AG04449 (cell line): ENCODE measurements at regions of chr12 and their contacts with region 1.

Region 1: GRCh38 chr12:52278541-52279421 is 4.3 kb downstream of the KRT86 start:
- DNase-seq: no peak
- H3K4me3 ChIP-seq: peak overlapping the region; percentile 13; the same call in 1 of the 2 replicates
- CTCF ChIP-seq: peak; percentile 100

Region 2: GRCh38 chr12:52192173-52192791 is 86.5 kb before region 1 on chr12:
- CTCF ChIA-PET with region 1: interaction called, 16 read pairs
- POLR2A ChIA-PET with region 1: no interaction called
- DNase-seq: peak; percentile 98
- H3K4me3 ChIP-seq: no peak overlapping the region
- CTCF ChIP-seq: no peak

Region 3: DNA sequence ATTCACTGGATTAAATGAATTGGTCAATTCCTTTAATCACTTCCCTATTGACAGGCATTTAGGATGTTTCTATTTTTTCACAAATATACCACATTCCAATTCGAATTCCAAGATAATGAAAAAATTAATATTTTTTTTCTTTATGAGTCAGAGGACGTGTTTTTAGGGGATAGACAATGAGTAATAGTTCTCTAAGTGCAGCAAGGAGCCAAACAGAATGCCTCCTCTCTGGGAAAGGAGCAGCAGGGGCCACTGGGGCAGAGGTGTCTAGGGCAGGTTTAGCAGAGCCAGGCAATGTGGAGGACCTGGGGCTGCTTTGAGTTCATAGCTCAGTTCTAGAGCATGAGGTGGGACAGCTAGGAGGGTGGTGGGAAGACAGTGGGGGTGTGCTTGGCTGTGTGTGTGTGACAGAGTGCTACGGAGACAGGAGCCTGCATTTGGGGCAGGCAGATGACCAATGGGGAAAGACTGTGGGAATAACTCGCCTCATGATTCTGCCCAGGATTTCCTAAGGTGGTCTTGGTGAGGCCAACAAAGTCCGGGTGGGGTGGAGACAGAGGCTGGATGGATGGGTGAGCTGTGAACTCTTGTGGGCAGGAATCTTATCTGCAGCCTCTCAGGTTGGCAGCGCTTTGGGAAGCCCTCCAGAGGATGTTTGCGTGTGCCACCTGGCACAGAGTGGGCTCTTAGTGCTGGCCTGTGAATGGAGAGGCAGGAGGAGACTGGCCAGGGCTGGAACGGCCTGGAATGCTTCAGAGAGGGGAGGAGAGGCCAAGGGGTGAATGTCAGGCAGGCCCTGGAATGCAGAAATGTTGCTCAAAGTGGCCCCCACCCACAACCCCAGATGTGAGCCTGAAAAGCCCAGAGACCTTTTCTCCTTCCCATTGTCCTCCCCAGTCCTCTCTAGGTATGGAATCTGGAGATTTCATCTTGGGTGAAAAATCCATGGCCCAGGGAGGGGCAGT is 48.2 kb before region 1 on chr12:
- CTCF ChIA-PET with region 1: interaction called, 46 read pairs
- POLR2A ChIA-PET with region 1: interaction called, 3 read pairs
- DNase-seq: peak; percentile 50
- H3K4me3 ChIP-seq: no peak overlapping the region
- CTCF ChIP-seq: no peak

Region 4: DNA sequence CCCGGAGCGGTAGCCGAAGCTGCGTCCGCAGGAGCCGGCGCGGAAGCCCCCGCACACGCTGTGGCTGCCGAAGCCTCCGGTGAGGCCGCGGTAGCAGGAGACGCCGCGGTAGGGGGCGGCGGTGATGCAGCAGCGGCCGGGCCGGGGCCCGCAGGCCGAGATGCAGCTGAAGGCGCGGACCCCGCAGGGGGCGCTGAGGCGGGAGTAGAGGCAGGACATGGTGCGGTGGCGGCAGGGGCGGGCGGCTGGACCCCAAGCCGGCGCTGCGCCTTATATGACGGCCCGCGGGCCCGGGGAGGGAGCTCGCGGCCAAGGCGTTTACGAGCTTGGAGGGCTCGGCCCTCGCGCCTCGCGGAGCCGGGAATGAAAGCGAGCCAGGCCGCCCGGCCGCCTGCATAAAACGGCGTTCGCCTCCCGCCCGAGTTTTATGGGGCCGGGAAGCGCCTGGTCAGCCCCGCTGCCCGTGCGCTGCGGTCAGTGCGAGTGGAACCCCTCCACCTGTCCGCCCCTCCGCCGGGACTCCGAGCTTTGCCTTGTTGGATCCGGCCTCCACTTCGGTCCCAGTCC is 20.4 kb before region 1 on chr12:
- CTCF ChIA-PET with region 1: interaction called, 146 read pairs
- POLR2A ChIA-PET with region 1: no interaction called
- DNase-seq: no peak
- H3K4me3 ChIP-seq: peak overlapping the region; percentile 8; the same call in 1 of the 2 replicates
- CTCF ChIP-seq: no peak

Region 5: DNA sequence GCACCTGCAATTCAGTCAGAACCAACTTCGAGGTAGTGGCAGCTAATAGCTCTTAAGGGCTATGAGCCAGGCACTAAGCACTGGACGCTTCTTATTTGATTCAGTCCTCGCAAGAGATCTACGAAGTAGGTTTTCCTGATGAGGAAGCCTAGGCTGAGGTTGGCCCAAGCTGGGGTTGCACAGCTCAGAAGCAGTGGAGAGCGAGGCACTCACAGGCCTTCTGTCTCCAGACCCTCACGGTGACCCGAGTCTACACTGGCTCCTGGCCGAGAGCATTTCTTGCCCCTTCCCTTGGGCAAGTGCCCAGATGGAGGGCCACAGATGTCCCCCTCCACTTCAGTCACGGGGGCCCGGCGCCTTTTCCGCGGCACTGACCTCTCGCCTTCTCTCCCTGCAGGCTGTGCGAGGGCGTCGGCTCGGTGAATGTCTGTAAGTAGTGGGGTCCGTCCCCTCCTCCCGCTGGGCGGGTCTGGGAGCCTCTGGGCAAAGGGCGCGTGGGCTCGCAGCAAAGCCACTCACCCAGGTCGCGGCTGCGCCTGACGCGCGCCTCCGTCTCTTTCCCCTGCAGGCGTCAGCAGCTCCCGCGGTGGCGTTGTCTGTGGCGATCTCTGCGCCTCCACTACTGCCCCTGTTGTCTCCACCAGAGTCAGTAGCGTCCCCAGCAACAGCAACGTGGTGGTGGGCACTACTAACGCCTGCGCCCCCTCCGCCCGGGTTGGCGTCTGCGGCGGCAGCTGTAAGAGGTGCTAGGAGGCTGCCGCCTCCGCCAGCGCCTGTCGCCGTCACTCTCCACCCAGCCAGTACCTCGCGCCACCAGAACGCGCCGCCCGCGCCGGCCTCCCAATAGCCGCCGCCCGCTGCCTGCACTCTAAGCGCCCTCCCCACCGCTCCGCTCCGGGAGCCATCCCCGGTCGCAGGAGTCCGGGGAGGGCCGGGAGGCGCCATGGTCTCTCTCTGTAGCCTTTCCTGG is 29.3 kb after region 1 on chr12:
- CTCF ChIA-PET with region 1: interaction called, 29 read pairs
- POLR2A ChIA-PET with region 1: interaction called, 3 read pairs
- DNase-seq: no peak
- H3K4me3 ChIP-seq: peak overlapping the region; percentile 53
- CTCF ChIP-seq: no peak

Region 6: DNA sequence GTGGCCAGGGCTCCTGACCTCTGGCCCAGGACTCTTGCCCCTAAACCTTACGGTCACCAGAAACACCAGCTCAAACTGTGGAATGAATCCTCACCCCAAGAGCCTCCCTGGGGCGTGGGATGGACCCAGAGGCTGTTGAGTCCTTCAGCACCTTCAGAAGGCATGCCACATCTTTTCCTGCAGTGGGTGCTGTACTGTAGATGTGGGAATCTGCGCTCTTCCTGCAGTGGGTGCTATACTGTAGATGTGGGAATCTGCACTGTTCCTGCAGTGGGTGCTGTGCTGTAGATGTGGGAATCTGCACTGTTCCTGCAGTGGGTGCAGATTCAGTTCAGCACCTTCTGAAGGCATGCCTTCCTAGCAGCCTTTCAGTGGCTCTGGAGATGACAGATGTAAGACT is 126.2 kb after region 1 on chr12:
- CTCF ChIA-PET with region 1: no interaction called
- POLR2A ChIA-PET with region 1: no interaction called
- DNase-seq: no peak
- H3K4me3 ChIP-seq: no peak overlapping the region
- CTCF ChIP-seq: no peak